Calu3 (cell line): ENCODE measurements at regions of chr1 and their contacts with region 1.

Region 1: GRCh38 chr1:155250633-155251449 is 4.4 kb downstream of the ENTREP3 start:
- DNase-seq: peak; percentile 98
- H3K4me3 Mint-ChIP-seq: no peak overlapping the region
- H3K27ac Mint-ChIP-seq: no peak overlapping the region
- H3K4me1 Mint-ChIP-seq: peaks cover 15% of the 10 kb centered on the region
- H3K27me3 Mint-ChIP-seq: no peaks in the 10 kb centered on the region
- CTCF ChIP-seq: peak; percentile 98

Region 2: DNA sequence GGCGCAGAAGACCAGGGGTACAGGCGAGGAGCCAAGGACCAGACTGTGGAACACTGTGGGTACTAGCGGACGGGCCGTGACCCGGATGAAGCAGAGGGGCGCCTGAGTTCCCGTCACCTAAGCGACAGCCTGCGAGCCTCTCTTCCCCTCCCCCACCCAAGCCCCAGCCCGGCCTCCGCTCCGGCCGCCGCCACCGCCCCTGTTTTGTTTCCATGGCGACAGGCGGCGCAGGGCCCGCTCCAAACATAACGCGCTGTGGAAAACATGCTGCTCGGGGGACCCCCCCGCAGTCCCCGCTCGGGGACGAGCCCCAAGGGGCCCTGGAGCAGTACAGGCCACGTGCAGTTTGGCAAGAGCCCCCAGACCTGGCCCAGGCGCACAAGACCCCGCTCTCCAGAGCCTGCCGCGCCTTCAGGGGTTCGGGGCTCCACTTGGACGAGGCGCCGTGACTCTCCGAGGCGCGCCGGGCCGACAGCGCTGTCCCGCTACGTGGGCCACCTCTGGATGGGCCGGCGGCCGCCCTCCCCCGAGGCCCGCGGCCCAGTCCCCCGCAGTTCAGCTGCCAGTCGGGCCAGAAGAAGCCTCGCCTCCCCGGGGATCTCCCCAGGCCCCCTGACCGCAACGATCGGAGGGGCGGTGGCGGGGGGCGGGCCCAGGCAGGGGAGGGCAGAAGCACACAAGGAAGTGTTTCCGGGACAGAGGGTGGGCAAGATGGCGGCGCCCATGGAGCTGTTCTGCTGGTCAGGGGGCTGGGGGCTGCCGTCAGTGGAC is 42.1 kb before region 1 on chr1 and contains the start of gene MTX1:
- CTCF ChIA-PET with region 1: interaction called, 10 read pairs
- intact Hi-C with region 1: no loop called
- DNase-seq: peak; percentile 87
- H3K4me3 Mint-ChIP-seq: peak within 1 kb of the TSS; percentile 98
- H3K27ac Mint-ChIP-seq: peak within 1 kb of the TSS; percentile 92
- H3K4me1 Mint-ChIP-seq: peaks cover 30% of the 10 kb centered on the region
- H3K27me3 Mint-ChIP-seq: no peaks in the 10 kb centered on the region
- CTCF ChIP-seq: no peak
- total RNA-seq, gene MTX1: 58.9 and 60.0 TPM in 2 replicates

Region 3: DNA sequence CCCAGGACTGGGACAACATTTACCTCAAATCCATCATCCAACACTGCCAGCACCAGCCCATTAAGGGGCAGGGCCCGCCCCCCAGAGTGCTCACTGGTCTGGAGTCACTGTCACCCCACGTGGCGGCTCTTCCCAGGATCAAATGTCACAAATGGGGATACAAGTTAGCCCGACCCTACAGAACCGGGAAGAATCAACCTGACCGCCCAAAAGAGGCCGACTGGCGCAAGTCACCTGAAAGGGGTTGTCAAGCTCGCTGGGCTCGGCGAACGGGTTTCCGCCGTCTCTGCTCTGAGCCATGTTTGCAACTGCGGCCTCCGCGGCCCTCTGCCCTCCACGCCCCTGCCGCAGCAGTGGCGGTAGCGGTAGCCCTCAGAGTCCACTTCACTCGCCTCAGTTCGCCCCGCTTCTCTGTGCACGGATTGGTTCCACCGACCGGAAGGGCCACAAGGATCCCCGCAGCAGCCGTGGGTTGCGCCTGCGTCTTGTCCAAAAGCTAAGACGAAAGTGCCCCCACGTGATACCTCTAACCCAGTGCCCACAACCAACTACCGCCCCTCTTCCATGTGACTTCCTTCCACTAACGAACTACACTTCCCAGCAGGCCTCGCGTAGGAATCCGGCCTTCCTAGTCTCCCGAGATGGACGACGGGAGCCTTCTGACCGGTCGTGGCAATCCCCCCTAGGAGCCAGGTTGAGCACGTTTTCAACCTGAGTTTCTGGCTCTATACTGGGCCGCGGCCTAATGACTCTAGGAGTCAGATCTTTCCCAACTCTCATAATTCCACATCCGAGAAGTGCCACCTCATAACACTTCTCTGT is 11.2 kb after region 1 on chr1 and contains the start of gene SCAMP3:
- CTCF ChIA-PET with region 1: interaction called, 24 read pairs
- intact Hi-C with region 1: no loop called
- DNase-seq: peak; percentile 95
- H3K4me3 Mint-ChIP-seq: peak within 1 kb of the TSS; percentile 96
- H3K27ac Mint-ChIP-seq: peak within 1 kb of the TSS; percentile 97
- H3K4me1 Mint-ChIP-seq: peaks cover 28% of the 10 kb centered on the region
- H3K27me3 Mint-ChIP-seq: no peaks in the 10 kb centered on the region
- CTCF ChIP-seq: no peak
- total RNA-seq, gene SCAMP3: 85.1 and 104 TPM in 2 replicates

Region 4: GRCh38 chr1:155277070-155277895 is 26.4 kb after region 1 on chr1 and contains the start of gene HCN3:
- CTCF ChIA-PET with region 1: interaction called, 11 read pairs
- intact Hi-C with region 1: no loop called
- DNase-seq: peak; percentile 99
- H3K4me3 Mint-ChIP-seq: peak within 1 kb of the TSS; percentile 75
- H3K27ac Mint-ChIP-seq: no peak within 1 kb of the TSS
- H3K4me1 Mint-ChIP-seq: peaks cover 31% of the 10 kb centered on the region
- H3K27me3 Mint-ChIP-seq: no peaks in the 10 kb centered on the region
- CTCF ChIP-seq: peak; percentile 82
- total RNA-seq, gene HCN3: 11.8 and 19.6 TPM in 2 replicates

Region 5: GRCh38 chr1:155287987-155288543 is 37.2 kb after region 1 on chr1:
- CTCF ChIA-PET with region 1: no interaction called
- intact Hi-C with region 1: no loop called
- DNase-seq: no peak
- H3K4me3 Mint-ChIP-seq: no peak overlapping the region
- H3K27ac Mint-ChIP-seq: no peak overlapping the region
- H3K4me1 Mint-ChIP-seq: no peaks in the 10 kb centered on the region
- H3K27me3 Mint-ChIP-seq: no peaks in the 10 kb centered on the region
- CTCF ChIP-seq: no peak

Region 6: GRCh38 chr1:155308493-155309422 is 57.9 kb after region 1 on chr1 and contains the start of gene FDPS:
- CTCF ChIA-PET with region 1: interaction called, 18 read pairs
- intact Hi-C with region 1: no loop called
- DNase-seq: peak; percentile 98
- H3K4me3 Mint-ChIP-seq: peak within 1 kb of the TSS; percentile 90
- H3K27ac Mint-ChIP-seq: peak within 1 kb of the TSS; percentile 97
- H3K4me1 Mint-ChIP-seq: peaks cover 60% of the 10 kb centered on the region
- H3K27me3 Mint-ChIP-seq: no peaks in the 10 kb centered on the region
- CTCF ChIP-seq: no peak
- total RNA-seq, gene FDPS: 329 and 410 TPM in 2 replicates

Region 7: GRCh38 chr1:155323798-155324610 is 73.2 kb after region 1 on chr1:
- CTCF ChIA-PET with region 1: interaction called, 44 read pairs
- intact Hi-C with region 1: loop called (anchors 2 kb)
- DNase-seq: peak; percentile 98
- H3K4me3 Mint-ChIP-seq: peak overlapping the region; percentile 90
- H3K27ac Mint-ChIP-seq: peak overlapping the region; percentile 60
- H3K4me1 Mint-ChIP-seq: peaks cover 41% of the 10 kb centered on the region
- H3K27me3 Mint-ChIP-seq: no peaks in the 10 kb centered on the region
- CTCF ChIP-seq: no peak

Region 8: DNA sequence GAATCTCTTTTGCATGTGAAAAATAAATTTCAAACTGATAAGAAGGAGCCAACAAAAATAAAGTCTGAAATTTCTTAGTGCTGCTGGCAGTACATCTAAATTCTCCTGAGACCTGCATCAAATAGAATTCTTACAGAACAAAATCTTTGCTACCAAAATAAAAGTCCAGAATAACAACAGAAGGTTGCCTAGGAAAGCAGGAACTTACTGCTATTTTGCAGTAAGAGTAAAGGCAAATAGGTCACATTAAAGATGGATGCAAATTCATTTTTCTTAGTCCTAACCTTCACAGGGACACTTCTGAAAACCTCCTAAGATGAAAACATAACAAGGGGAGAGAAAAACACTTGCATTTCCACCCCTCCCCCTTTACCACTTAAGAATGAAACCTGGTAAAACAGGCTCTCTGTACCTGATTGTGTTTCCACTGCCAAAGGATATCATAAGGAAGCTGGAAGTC is 128.8 kb after region 1 on chr1:
- CTCF ChIA-PET with region 1: no interaction called
- intact Hi-C with region 1: no loop called
- DNase-seq: no peak
- H3K4me3 Mint-ChIP-seq: no peak overlapping the region
- H3K27ac Mint-ChIP-seq: no peak overlapping the region
- H3K4me1 Mint-ChIP-seq: no peaks in the 10 kb centered on the region
- H3K27me3 Mint-ChIP-seq: no peaks in the 10 kb centered on the region
- CTCF ChIP-seq: no peak